ENCODE measurements at regions of chr1 and their contacts with region 1.

Region 1: DNA sequence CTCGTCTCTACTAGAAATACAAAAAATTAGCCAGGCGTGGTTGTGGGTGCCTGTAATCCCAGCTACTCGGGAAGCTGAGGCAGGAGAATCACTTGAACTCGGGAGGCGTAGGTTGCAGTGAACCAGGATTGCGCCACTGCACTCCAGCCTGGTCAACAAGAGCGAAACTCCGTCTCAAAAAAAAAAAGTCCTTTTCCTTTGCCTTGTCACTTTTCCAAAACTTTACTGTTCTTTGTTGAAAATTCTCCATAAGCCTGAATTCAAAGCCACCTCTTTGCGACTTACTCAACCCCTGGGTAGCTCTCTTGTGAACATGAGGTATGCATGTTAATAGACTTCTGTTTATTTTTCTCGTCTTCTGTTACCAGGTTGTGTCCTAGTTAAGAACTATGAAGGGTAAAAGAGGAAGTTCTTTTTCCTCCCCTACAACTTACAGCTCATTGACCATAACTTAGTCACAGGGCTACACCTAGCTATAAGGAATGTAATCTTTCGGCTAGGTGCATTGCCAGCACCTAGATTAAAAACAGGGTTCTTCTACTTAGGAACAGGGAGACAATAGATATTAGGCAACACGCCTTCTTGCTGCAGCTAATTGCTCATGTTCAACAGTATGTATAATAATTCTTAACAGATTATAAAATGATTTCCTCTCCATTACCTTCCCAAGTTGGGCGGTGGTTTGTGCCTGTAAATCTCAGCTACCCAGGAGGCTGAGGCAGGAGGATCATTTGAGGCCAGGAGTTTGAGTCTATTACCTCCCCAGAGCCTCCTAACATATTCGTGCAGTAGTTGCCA is 40.9 kb downstream of the PTAFR start:
- DNase-seq: peak; percentile 51
- H3K4me3 Mint-ChIP-seq: no peak overlapping the region
- H3K27ac Mint-ChIP-seq: no peak overlapping the region
- H3K4me1 Mint-ChIP-seq: peaks cover 18% of the 10 kb centered on the region
- H3K27me3 Mint-ChIP-seq: no peaks in the 10 kb centered on the region
- CTCF ChIP-seq: no peak

Region 2: GRCh38 chr1:28156821-28157220 is 21.3 kb after region 1 on chr1:
- CTCF ChIA-PET with region 1: no interaction called
- POLR2A ChIA-PET with region 1: interaction called, 3 read pairs
- intact Hi-C with region 1: loop called (anchors 1 kb)
- DNase-seq: peak; percentile 67
- H3K4me3 Mint-ChIP-seq: no peak overlapping the region
- H3K27ac Mint-ChIP-seq: no peak overlapping the region
- H3K4me1 Mint-ChIP-seq: peaks cover 16% of the 10 kb centered on the region
- H3K27me3 Mint-ChIP-seq: no peaks in the 10 kb centered on the region
- CTCF ChIP-seq: no peak